A549 (cell line): ENCODE measurements at regions of chr2 and their contacts with region 1.

Region 1: GRCh38 chr2:41869542-41870264 is 178.1 kb upstream of the PKDCC start:
- DNase-seq: peak; percentile 75 to 76
- ATAC-seq: peak; percentile 89 to 96
- H3K4me3 ChIP-seq: no peak overlapping the region
- H3K27ac ChIP-seq: peak overlapping the region; percentile 73 to 85
- H3K4me1 ChIP-seq: peaks cover 62% of the 10 kb centered on the region
- CTCF ChIP-seq: peak; percentile 96
- EP300 ChIP-seq: no peak
- POLR2A ChIP-seq: no peak
- RAD21 ChIP-seq: peak; percentile 99 to 100

Region 2: DNA sequence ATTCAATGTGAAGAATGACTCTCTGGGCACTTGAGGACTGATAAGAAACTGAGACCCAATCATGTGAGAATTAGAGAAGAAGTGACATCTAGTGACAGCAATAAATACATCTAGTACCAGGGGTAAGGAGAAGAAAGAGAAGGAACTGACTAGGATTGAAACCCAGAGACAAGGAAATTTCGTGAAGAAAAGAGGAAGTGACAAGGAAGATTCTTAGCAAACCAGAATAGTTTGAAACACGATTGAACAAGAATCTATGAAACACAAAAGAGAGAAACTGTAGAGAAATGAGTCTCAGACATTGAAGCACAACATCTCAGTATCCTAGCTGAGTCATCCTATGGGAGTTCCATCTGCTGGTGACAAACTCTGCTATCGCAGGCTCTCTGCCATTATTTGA is 393.7 kb before region 1 on chr2:
- CTCF ChIA-PET with region 1: no interaction called
- POLR2A ChIA-PET with region 1: no interaction called
- DNase-seq: no peak
- ATAC-seq: no peak
- H3K4me3 ChIP-seq: no peak overlapping the region
- H3K27ac ChIP-seq: no peak overlapping the region
- H3K4me1 ChIP-seq: no peaks in the 10 kb centered on the region
- CTCF ChIP-seq: no peak
- EP300 ChIP-seq: no peak
- POLR2A ChIP-seq: no peak
- RAD21 ChIP-seq: no peak

Region 3: DNA sequence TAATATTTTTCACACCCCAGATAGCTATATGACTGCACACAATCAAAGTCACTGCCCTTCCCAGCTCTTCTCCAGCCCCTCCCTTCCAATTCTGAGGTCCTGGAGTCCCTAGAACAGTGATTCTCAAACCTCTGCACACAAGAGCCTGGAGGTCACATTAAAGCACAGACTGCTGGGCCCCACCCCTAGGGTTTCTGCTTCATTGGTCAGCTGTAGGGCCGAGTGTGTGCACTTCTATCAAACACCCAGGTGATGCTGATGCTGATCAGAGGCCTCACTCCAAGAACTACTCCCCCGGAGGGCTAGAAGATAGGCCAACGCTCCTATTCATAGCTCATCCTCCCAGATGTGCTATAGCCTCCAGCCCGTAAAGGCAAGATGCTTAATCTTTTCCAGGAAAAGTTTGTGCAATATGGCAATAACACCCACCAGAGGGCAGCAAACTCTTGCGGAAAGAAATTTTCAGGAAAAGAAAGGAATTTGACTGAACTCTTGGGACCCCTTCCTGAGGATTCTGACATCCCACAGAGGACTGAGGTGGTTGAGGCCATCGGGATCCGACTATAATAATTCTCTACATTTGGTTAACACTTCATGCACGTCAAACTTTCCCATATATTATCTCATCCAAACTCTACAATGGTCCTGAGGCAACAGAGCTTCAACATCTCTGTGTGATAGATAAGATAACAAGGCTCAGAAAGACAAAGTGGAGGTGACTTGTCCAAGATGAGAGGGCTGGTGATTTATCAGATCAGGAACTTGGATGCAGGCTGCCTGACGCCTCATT is 16.1 kb before region 1 on chr2:
- CTCF ChIA-PET with region 1: interaction called, 393 read pairs
- POLR2A ChIA-PET with region 1: no interaction called
- DNase-seq: peak; percentile 61 to 77
- ATAC-seq: peak; percentile 83; a peak in 5 of 6 replicates
- H3K4me3 ChIP-seq: no peak overlapping the region
- H3K27ac ChIP-seq: peak overlapping the region; percentile 57 to 70
- H3K4me1 ChIP-seq: peaks cover 28% of the 10 kb centered on the region
- CTCF ChIP-seq: peak; percentile 98
- EP300 ChIP-seq: no peak
- POLR2A ChIP-seq: no peak
- RAD21 ChIP-seq: peak; percentile 99

Region 4: DNA sequence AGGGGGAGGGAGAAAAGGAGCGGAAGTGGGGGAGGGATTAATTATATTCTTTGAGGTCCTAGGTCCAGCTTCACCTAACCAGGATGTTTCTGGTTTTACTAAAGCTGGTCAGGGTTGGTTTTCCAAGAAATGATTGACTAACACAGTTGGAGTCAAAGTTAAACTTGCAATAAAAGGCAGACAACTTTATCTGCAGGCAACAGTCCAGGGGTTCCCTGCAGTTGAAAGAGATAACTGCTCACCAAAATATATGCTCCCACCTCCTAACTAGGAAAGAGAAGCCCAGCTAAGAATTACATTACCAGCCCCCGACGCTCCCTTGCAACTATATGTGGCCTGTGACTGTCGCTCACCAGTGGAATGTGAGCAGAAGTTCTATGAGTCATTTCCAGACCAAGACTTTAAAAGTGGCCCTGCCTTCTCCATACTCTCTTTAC is 38.1 kb after region 1 on chr2:
- CTCF ChIA-PET with region 1: interaction called, 12 read pairs
- POLR2A ChIA-PET with region 1: no interaction called
- DNase-seq: no peak
- ATAC-seq: peak in 1 of 2 experiments; percentile 58; a peak in 3 of 6 replicates
- H3K4me3 ChIP-seq: no peak overlapping the region
- H3K27ac ChIP-seq: peak overlapping the region in 1 of 2 experiments; percentile 12; a peak in 1 of 6 replicates
- H3K4me1 ChIP-seq: peaks cover 11% of the 10 kb centered on the region
- CTCF ChIP-seq: no peak
- EP300 ChIP-seq: no peak
- POLR2A ChIP-seq: no peak
- RAD21 ChIP-seq: no peak

Region 5: DNA sequence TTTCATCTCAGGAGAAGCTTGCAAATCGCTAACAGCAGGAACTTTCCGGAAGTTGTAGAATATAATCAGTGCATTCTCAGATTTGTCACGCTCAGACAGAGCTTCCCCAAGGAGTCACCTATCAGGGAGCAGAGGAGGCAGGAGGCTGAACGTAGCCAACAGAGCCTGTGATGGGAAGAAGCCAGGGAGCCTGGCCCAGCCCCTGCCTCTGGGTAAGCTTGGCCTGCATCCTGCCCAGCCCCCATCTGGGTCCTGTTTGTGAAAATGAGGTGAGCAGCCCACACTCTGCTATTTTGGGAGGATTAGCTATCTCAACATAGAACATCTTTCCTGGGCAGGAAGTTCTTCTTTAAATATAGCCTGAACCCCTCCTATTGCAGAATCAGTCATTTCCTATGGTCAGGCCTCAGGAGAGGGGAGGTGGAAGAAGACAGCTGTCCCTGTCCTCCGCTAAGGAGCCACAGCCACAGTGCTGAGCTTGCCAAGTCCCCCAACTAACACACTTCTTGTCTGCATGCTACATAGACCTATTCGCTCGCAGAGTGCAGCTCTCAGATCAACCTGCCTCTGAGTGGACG is 159.0 kb after region 1 on chr2:
- CTCF ChIA-PET with region 1: interaction called, 27 read pairs
- POLR2A ChIA-PET with region 1: interaction called, 5 read pairs
- DNase-seq: no peak
- ATAC-seq: no peak
- H3K4me3 ChIP-seq: no peak overlapping the region
- H3K27ac ChIP-seq: no peak overlapping the region
- H3K4me1 ChIP-seq: no peaks in the 10 kb centered on the region
- CTCF ChIP-seq: no peak
- EP300 ChIP-seq: no peak
- POLR2A ChIP-seq: no peak
- RAD21 ChIP-seq: no peak

Region 6: GRCh38 chr2:42053791-42054701 is 184.3 kb after region 1 on chr2:
- CTCF ChIA-PET with region 1: interaction called, 65 read pairs
- POLR2A ChIA-PET with region 1: no interaction called
- DNase-seq: no peak
- ATAC-seq: peak in 1 of 2 experiments; percentile 3; a peak in 3 of 6 replicates
- H3K4me3 ChIP-seq: no peak overlapping the region
- H3K27ac ChIP-seq: peak overlapping the region; percentile 61 to 96
- H3K4me1 ChIP-seq: peaks cover 89% of the 10 kb centered on the region
- CTCF ChIP-seq: no peak
- EP300 ChIP-seq: no peak
- POLR2A ChIP-seq: no peak
- RAD21 ChIP-seq: no peak

Region 7: DNA sequence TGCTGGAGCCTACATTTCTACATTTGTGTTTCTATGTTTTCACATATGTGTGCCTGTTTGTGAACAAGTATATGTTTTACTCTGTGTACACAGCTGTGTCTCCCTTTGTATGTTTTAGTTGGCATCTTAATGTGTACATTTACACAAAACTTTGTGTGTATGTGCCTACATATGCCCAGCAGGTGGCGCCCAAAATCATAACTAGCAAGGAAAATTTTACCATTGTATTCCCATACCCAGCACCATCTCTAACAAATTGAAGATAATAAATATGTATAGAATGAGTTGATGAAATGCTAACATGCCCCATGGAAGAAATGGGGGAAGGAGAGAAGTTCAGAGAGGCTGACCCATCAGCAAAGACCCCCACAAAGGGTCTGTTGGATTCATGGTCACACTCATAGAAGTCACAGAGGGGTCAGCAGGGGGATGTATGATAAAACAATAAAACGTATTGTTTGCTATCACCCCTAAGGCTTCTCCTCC is 226.3 kb after region 1 on chr2:
- CTCF ChIA-PET with region 1: interaction called, 761 read pairs
- POLR2A ChIA-PET with region 1: no interaction called
- DNase-seq: peak; percentile 49 to 84
- ATAC-seq: peak; percentile 67 to 76; a peak in 5 of 6 replicates
- H3K4me3 ChIP-seq: no peak overlapping the region
- H3K27ac ChIP-seq: peak overlapping the region; percentile 8 to 70; a peak in 3 of 6 replicates
- H3K4me1 ChIP-seq: peaks cover 31% of the 10 kb centered on the region
- CTCF ChIP-seq: peak; percentile 99
- EP300 ChIP-seq: no peak
- POLR2A ChIP-seq: no peak
- RAD21 ChIP-seq: peak; percentile 98 to 99